Activated naive CD4-positive, alpha-beta T cell treated with anti-CD3 and anti-CD28 coated beads for 36 hours (primary cell): ENCODE measurements at regions of chr14 and their contacts with region 1.

Region 1: GRCh38 chr14:89392181-89392580 is 24.9 kb downstream of the FOXN3 start:
- DNase-seq: no peak
- H3K4me3 Mint-ChIP-seq: no peak overlapping the region
- H3K27ac Mint-ChIP-seq: no peak overlapping the region
- H3K4me1 Mint-ChIP-seq: peaks cover 50% of the 10 kb centered on the region
- H3K27me3 Mint-ChIP-seq: no peaks in the 10 kb centered on the region

Region 2: GRCh38 chr14:88983755-88984154 is 408.4 kb before region 1 on chr14:
- CTCF ChIA-PET with region 1: interaction called, 10 read pairs
- intact Hi-C with region 1: no loop called
- DNase-seq: no peak
- H3K4me3 Mint-ChIP-seq: no peak overlapping the region
- H3K27ac Mint-ChIP-seq: no peak overlapping the region
- H3K4me1 Mint-ChIP-seq: no peaks in the 10 kb centered on the region
- H3K27me3 Mint-ChIP-seq: peaks cover 17% of the 10 kb centered on the region